Calu3 (cell line): ENCODE measurements at regions of chr2 and their contacts with region 1.

Region 1: DNA sequence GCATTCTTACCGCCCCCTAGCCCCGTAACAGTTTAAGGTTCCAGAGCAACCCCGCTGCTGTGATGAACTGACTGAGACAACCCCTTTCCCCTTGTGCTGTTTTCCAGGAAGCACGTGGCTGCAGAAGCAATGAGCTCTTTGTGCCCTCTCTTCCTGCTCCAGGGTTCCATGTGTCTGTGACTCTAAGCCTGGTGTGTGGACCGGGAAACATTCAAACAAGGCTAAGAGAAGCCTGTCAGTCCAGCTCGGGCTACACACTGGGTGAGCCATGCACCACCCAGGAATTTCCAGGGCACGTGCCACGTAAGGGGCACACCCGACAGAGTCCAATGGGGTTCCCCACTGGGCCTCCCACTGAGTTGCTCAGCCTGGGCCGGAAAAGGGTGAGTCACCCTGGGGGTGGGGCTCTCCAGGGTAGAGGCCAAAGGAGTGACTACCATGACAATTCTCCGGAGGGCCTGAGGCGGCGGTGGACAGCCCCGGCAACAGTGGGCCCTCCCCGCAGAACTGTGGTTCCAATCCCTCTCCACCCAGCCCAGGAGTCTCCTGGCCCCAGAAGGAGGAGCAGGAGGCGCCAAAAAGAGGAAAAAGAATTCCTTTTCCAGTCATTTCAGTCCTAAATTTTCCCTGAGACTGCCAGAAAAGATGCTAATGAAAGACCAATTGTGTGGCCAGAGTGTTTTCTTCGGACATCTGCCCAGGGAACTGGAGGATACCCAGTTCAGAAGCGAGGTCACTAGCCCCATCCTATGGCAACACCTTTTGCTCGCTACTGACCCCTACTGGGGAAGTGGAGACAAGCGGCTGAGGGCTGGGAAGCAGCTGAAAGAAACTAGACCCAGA is 157.8 kb upstream of the SLC1A4 start:
- DNase-seq: peak; percentile 99
- H3K4me3 Mint-ChIP-seq: peak overlapping the region; percentile 48
- H3K27ac Mint-ChIP-seq: peak overlapping the region; percentile 97
- H3K4me1 Mint-ChIP-seq: peaks cover 52% of the 10 kb centered on the region
- H3K27me3 Mint-ChIP-seq: no peaks in the 10 kb centered on the region
- CTCF ChIP-seq: peak; percentile 90

Region 2: GRCh38 chr2:64653349-64654062 is 177.8 kb before region 1 on chr2 and contains the start of gene SERTAD2:
- CTCF ChIA-PET with region 1: interaction called, 15 read pairs
- intact Hi-C with region 1: loop called (anchors 10 kb)
- DNase-seq: peak; percentile 90
- H3K4me3 Mint-ChIP-seq: peak within 1 kb of the TSS; percentile 78
- H3K27ac Mint-ChIP-seq: peak within 1 kb of the TSS; percentile 72
- H3K4me1 Mint-ChIP-seq: peaks cover 42% of the 10 kb centered on the region
- H3K27me3 Mint-ChIP-seq: no peaks in the 10 kb centered on the region
- CTCF ChIP-seq: peak; percentile 9
- total RNA-seq, gene SERTAD2: 19.2 and 19.4 TPM in 2 replicates

Region 3: GRCh38 chr2:64797881-64798575 is 33.3 kb before region 1 on chr2:
- CTCF ChIA-PET with region 1: interaction called, 4 read pairs
- intact Hi-C with region 1: loop called (anchors 2 kb)
- DNase-seq: peak; percentile 64
- H3K4me3 Mint-ChIP-seq: no peak overlapping the region
- H3K27ac Mint-ChIP-seq: peak overlapping the region; percentile 43
- H3K4me1 Mint-ChIP-seq: peaks cover 5% of the 10 kb centered on the region
- H3K27me3 Mint-ChIP-seq: no peaks in the 10 kb centered on the region
- CTCF ChIP-seq: no peak

Region 4: DNA sequence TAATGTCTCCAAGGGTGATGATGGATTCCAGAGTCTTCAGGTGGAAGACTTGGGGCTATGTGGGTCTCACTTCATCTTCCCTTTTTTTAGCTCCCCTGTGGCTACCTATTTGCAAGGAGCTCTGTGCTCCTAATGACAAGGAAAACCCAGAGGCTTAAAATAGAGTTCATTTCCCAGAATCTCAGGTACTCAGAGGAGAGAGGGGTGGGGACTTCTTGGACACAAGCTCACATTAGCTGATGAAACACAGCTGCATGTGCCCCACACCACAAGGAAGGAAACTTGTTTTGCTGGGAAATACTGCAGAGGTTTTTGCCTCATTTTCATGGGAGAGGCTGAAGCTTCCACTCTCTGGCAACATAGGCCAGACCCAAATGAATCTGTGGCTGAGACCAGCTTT is 19.3 kb after region 1 on chr2:
- CTCF ChIA-PET with region 1: interaction called, 10 read pairs
- intact Hi-C with region 1: no loop called
- DNase-seq: no peak
- H3K4me3 Mint-ChIP-seq: no peak overlapping the region
- H3K27ac Mint-ChIP-seq: no peak overlapping the region
- H3K4me1 Mint-ChIP-seq: peaks cover 28% of the 10 kb centered on the region
- H3K27me3 Mint-ChIP-seq: no peaks in the 10 kb centered on the region
- CTCF ChIP-seq: no peak

Region 5: GRCh38 chr2:65227425-65228262 is 396.3 kb after region 1 on chr2 and contains the start of gene ACTR2:
- CTCF ChIA-PET with region 1: no interaction called
- intact Hi-C with region 1: no loop called
- DNase-seq: peak; percentile 95
- H3K4me3 Mint-ChIP-seq: peak within 1 kb of the TSS; percentile 93
- H3K27ac Mint-ChIP-seq: peak within 1 kb of the TSS; percentile 97
- H3K4me1 Mint-ChIP-seq: no peaks in the 10 kb centered on the region
- H3K27me3 Mint-ChIP-seq: no peaks in the 10 kb centered on the region
- CTCF ChIP-seq: no peak
- total RNA-seq, gene ACTR2: 239 and 240 TPM in 2 replicates